ENCODE measurements at regions of chr6 and their contacts with region 1.

Region 1: GRCh38 chr6:116511404-116512110 is at the start of gene CALHM5:
- DNase-seq: peak; percentile 91
- H3K4me3 ChIP-seq: peak within 1 kb of the TSS; percentile 26 to 82 (median 35)
- H3K27ac ChIP-seq: peak within 1 kb of the TSS; percentile 95
- H3K4me1 ChIP-seq: peaks cover 19% of the 10 kb centered on the region
- H3K27me3 ChIP-seq: no peaks in the 10 kb centered on the region
- CTCF ChIP-seq: peak; percentile 55 to 67
- POLR2A ChIP-seq: peak; percentile 67
- total RNA-seq, gene CALHM5: 6.6 and 7.1 TPM in 2 replicates

Region 2: DNA sequence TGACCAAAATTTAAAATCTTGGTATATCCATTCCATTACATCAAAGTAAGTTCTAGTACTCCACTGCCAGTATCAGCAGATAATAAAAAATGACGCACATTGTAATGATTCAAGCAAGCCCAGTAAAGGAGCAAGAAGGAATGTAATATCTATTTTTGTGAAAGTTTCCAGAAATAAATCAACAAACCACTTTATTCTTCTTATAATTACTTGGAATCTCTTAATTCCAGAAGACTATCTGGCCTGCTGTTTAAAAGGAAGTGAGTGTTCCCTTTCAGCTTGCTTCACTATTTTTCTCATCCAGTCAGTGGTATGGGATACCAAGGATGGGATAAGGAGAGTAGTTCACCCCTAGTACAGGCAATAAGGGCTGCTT is 183.0 kb before region 1 on chr6:
- CTCF ChIA-PET with region 1: interaction called, 12 read pairs
- POLR2A ChIA-PET with region 1: no interaction called
- dilution Hi-C with region 1: no loop called
- intact Hi-C with region 1: no loop called
- DNase-seq: no peak
- H3K4me3 ChIP-seq: no peak overlapping the region
- H3K27ac ChIP-seq: peak overlapping the region; percentile 75
- H3K4me1 ChIP-seq: peaks cover 16% of the 10 kb centered on the region
- H3K27me3 ChIP-seq: no peaks in the 10 kb centered on the region
- CTCF ChIP-seq: no peak
- POLR2A ChIP-seq: no peak

Region 3: GRCh38 chr6:116444092-116444491 is 67.5 kb before region 1 on chr6:
- CTCF ChIA-PET with region 1: interaction called, 21 read pairs
- POLR2A ChIA-PET with region 1: no interaction called
- dilution Hi-C with region 1: no loop called
- intact Hi-C with region 1: no loop called
- DNase-seq: peak; percentile 44
- H3K4me3 ChIP-seq: no peak overlapping the region
- H3K27ac ChIP-seq: no peak overlapping the region
- H3K4me1 ChIP-seq: peaks cover 3% of the 10 kb centered on the region
- H3K27me3 ChIP-seq: no peaks in the 10 kb centered on the region
- CTCF ChIP-seq: peak; percentile 31 to 48
- POLR2A ChIP-seq: no peak

Region 4: DNA sequence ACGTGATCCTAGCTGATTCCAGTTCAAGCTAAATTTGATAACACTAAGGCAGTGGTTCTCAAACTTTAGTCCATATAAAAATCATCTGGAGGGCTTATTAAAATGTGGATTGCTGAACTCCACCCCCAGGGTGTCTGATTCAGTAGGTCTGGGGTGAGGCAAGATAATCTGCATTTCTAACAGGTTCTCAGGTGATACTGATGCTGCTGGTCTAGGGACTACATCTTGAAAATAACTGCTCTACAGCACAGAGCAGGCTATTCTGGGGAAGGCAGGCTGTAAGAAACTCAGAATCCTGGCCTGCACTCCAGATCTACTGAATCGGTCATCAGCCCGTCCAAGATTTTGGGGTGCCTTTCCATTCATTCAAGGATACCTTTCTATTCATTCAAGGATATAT is 11.3 kb after region 1 on chr6:
- CTCF ChIA-PET with region 1: interaction called, 44 read pairs
- POLR2A ChIA-PET with region 1: no interaction called
- dilution Hi-C with region 1: no loop called
- intact Hi-C with region 1: loop called (anchors 1 kb)
- DNase-seq: no peak
- H3K4me3 ChIP-seq: no peak overlapping the region
- H3K27ac ChIP-seq: no peak overlapping the region
- H3K4me1 ChIP-seq: peaks cover 2% of the 10 kb centered on the region
- H3K27me3 ChIP-seq: no peaks in the 10 kb centered on the region
- CTCF ChIP-seq: no peak
- POLR2A ChIP-seq: no peak

Region 5: GRCh38 chr6:116561377-116562018 is 49.9 kb after region 1 on chr6:
- CTCF ChIA-PET with region 1: interaction called, 34 read pairs
- POLR2A ChIA-PET with region 1: no interaction called
- dilution Hi-C with region 1: no loop called
- intact Hi-C with region 1: loop called (anchors 2 kb)
- DNase-seq: peak; percentile 84
- H3K4me3 ChIP-seq: no peak overlapping the region
- H3K27ac ChIP-seq: no peak overlapping the region
- H3K4me1 ChIP-seq: peaks cover 6% of the 10 kb centered on the region
- H3K27me3 ChIP-seq: no peaks in the 10 kb centered on the region
- CTCF ChIP-seq: peak; percentile 79 to 84
- POLR2A ChIP-seq: no peak

Region 6: GRCh38 chr6:116933485-116933884 is 421.9 kb after region 1 on chr6:
- CTCF ChIA-PET with region 1: no interaction called
- POLR2A ChIA-PET with region 1: no interaction called
- dilution Hi-C with region 1: no loop called
- intact Hi-C with region 1: no loop called
- DNase-seq: no peak
- H3K4me3 ChIP-seq: no peak overlapping the region
- H3K27ac ChIP-seq: no peak overlapping the region
- H3K4me1 ChIP-seq: no peaks in the 10 kb centered on the region
- H3K27me3 ChIP-seq: peaks cover 0 to 2% of the 10 kb centered on the region in 2 experiments
- CTCF ChIP-seq: no peak
- POLR2A ChIP-seq: no peak